Activated CD4-positive, alpha-beta memory T cell treated with anti-CD3 and anti-CD28 coated beads for 36 hours (primary cell): ENCODE measurements at regions of chr10 and their contacts with region 1.

Region 1: DNA sequence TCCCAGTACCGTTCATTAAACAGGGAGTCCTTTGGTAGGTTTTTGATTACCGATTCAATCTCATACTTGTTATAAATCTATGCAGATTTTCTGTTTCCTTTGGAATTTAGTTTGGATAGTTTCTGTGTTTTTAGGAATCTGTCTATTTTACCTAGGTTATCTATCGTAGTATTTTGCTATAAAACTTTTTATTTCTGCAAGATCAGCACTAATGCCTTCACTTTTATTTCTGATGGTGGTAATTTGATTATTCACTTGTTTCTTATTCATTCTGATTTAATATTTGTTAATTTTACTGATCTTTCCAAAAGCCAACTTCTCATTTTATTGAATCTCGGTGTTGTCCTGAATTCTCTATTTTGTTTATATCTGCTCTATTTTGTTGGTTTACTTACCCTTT is 577.7 kb upstream of the NRG3 start:
- DNase-seq: no peak
- H3K4me3 Mint-ChIP-seq: no peak overlapping the region
- H3K27ac Mint-ChIP-seq: no peak overlapping the region
- H3K4me1 Mint-ChIP-seq: no peaks in the 10 kb centered on the region
- H3K27me3 Mint-ChIP-seq: no peaks in the 10 kb centered on the region

Region 2: DNA sequence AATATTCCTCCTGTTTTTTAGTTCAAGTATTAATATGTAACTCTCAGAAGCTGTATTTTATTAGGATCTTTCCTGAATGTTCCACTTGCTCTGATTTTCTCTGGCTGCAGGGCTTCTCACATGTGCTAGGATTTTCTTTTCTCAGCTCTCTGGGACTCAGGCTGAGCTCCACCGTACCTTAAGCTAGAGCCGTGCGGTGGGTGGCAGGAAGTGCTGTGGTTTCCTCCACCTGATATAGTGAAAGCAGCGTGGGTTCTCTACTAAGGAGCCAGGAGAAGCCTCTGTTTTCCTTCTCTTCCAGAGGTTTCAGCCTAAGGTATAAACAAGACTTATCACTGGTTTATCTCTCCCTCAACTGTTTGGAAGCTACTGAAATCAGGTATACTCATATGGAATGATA is 1011.3 kb after region 1 on chr10:
- CTCF ChIA-PET with region 1: no interaction called
- POLR2A ChIA-PET with region 1: no interaction called
- intact Hi-C with region 1: loop called (anchors 5 kb)
- DNase-seq: no peak
- H3K4me3 Mint-ChIP-seq: no peak overlapping the region
- H3K27ac Mint-ChIP-seq: no peak overlapping the region
- H3K4me1 Mint-ChIP-seq: no peaks in the 10 kb centered on the region
- H3K27me3 Mint-ChIP-seq: no peaks in the 10 kb centered on the region